ENCODE measurements at regions of chr7 and their contacts with region 1.

Region 1: DNA sequence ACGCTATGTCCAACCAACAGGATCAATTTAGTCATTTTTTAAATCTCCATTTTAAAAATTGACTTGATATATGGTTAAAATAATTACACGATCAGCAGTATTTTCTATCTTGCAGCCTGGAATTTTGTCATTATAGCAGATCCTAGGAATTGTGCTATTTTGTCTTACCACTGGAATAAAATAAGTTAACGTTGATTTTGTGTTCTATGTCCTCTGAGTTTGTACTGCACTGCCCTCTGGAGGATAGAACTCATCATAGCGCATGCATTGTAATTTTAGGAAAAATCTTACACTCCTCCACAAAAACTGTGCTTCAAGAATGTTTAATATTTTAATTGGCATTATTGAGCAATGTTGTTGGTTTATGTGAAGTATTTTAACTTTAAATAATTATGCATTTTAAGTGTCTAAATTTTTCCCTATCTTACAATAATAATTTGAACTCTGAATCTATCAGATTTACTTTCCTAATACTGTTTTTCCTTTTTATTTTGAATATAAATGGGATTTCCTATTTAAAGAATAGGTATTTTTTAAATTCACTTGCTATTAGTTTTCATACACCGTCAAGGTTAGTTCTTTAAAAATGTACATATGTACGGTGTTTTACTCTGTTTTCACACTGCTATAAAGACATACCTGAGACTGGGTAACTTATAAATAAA is 220.1 kb downstream of the PPP1R3A start:
- DNase-seq: no peak
- ATAC-seq: no peak
- H3K4me3 ChIP-seq: no peak overlapping the region
- H3K27ac ChIP-seq: no peak overlapping the region
- H3K4me1 ChIP-seq: no peaks in the 10 kb centered on the region
- H3K27me3 ChIP-seq: no peaks in the 10 kb centered on the region
- CTCF ChIP-seq: peak; percentile 22 to 70 (median 63)

Region 2: DNA sequence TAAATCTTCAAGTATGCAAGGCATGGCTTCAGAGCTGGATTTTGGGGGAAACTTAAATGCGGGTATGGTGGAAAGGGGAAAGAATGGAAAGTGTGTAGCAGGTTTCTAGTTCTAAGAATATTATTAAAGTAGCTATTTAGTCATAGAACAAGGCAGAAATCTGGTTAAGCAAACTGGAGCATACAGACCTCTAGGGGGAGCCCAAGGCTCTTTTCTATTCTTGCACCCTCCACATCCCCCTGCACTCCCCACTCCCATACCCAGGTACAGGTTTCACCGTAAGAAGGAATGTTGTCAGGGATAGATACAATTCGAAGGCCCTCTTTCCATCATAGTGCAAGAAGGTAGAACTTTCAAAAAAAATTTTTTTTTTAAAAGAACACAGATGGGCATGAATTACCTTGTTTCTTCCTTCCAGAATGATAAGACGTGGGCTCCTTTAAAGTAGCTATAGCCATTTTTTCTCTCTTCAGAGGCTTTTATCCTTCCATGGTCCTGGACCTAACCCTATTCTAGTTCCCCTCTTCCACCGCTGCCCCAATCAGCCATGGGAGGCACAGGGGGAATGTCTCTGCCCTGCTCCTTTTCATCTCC is 538.8 kb before region 1 on chr7:
- intact Hi-C with region 1: loop called in 2 of 10 experiments (anchors 10 kb)
- DNase-seq: no peak
- ATAC-seq: no peak
- H3K4me3 ChIP-seq: no peak overlapping the region
- H3K27ac ChIP-seq: no peak overlapping the region
- H3K4me1 ChIP-seq: no peaks in the 10 kb centered on the region
- H3K27me3 ChIP-seq: peaks cover 0 to 5% (median 0%) of the 10 kb centered on the region in 7 donors
- CTCF ChIP-seq: peak; percentile 19 to 65 (median 50)

Region 3: DNA sequence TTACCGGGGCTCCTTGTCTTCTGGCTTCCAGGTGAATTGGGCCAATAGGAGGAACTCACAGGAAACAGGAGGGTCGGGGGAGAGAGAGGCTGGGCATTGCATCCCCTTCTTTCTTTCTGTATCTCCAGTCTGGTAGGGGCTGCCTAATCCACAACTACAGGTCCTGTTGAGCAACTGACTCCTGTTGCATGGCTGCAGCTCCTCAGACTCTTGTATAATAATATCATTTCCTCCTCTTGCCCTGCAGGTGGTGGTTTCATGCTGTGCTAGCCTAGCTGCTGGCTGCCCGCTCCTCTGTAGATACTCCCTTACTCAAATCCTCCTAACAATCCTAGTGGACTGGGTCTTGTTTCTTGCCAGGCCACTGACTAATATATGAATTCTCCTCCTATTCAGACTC is 303.8 kb before region 1 on chr7:
- intact Hi-C with region 1: loop called in 4 of 10 experiments (anchors 5 to 10 kb)
- DNase-seq: no peak
- ATAC-seq: no peak
- H3K4me3 ChIP-seq: no peak overlapping the region
- H3K27ac ChIP-seq: no peak overlapping the region
- H3K4me1 ChIP-seq: peaks cover 0 to 8% (median 0%) of the 10 kb centered on the region in 9 donors
- H3K27me3 ChIP-seq: no peaks in the 10 kb centered on the region
- CTCF ChIP-seq: no peak

Region 4: GRCh38 chr7:113404245-113404644 is 294.4 kb before region 1 on chr7:
- intact Hi-C with region 1: loop called in 6 of 10 experiments (anchors 5 to 10 kb)
- DNase-seq: no peak
- ATAC-seq: no peak
- H3K4me3 ChIP-seq: no peak overlapping the region
- H3K27ac ChIP-seq: no peak overlapping the region
- H3K4me1 ChIP-seq: no peaks in the 10 kb centered on the region
- H3K27me3 ChIP-seq: peaks cover 0 to 4% (median 0%) of the 10 kb centered on the region in 7 donors
- CTCF ChIP-seq: peak in 6 of 9 donors; percentile 12 to 45 (median 26)

Region 5: DNA sequence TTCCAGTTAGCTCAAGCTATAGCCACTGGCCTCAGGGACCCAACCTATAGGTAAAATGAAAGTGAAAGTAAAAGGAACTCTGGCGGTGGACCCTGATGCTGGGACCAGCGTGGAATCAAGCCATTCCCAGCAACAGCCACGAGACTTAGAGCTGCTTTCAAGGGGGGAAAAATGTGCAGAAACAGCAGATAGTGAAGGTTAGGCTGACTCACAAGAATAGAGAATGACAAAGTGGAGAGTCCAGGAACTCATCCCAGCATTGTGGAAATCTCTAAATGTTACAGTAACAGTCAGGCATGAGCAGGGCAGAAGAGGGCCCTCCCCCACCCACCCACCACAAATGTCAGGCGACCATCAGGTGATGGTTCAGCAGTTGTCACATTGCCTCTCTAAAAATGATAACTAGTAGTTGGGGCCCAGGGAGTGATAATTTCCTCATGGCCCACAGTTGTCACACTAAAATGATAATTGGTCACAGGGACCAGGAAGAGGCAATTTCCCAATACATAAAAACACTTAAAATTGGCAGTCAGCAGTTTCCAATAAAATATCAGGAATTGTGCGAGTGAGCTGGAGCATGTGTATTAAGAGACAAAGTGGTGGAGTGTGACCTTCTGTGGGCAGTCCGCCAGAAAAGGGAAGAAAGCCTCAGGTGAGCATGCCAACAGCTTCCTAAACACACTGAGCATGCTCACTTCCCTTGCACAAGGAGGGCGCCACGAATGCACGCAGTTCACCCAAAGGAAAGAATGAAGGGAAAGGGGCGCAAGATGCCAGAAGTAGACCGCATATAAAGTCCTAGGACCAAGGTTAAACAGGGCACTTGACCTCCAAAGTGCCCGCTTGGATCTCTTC is 349.9 kb after region 1 on chr7:
- intact Hi-C with region 1: no loop called
- DNase-seq: no peak
- ATAC-seq: no peak
- H3K4me3 ChIP-seq: peak overlapping the region in 9 of 10 donors; percentile 5 to 36 (median 30)
- H3K27ac ChIP-seq: peak overlapping the region in 1 of 10 donors; percentile 57
- H3K4me1 ChIP-seq: peaks cover 0 to 31% (median 0%) of the 10 kb centered on the region in 9 donors
- H3K27me3 ChIP-seq: no peaks in the 10 kb centered on the region
- CTCF ChIP-seq: no peak

Measured in heart right ventricle (tissue), 16 donors.